Psoas muscle (tissue), 8 donors: ENCODE measurements at regions of chr16 and their contacts with region 1.

Region 1: GRCh38 chr16:30874821-30875717 is 18.8 kb downstream of the BCL7C start:
- DNase-seq: peak; percentile 93 to 96
- ATAC-seq: peak; percentile 98 to 99 (median 98)
- H3K4me3 ChIP-seq: peak overlapping the region; percentile 94
- H3K27ac ChIP-seq: peak overlapping the region; percentile 90
- H3K4me1 ChIP-seq: peaks cover 14% of the 10 kb centered on the region
- H3K27me3 ChIP-seq: no peaks in the 10 kb centered on the region
- CTCF ChIP-seq: no peak

Region 2: GRCh38 chr16:30526823-30527635 is 348.0 kb before region 1 on chr16:
- intact Hi-C with region 1: no loop called
- DNase-seq: peak; percentile 99
- ATAC-seq: peak; percentile 91 to 93 (median 92)
- H3K4me3 ChIP-seq: peak overlapping the region; percentile 93
- H3K27ac ChIP-seq: peak overlapping the region; percentile 99
- H3K4me1 ChIP-seq: peaks cover 17% of the 10 kb centered on the region
- H3K27me3 ChIP-seq: no peaks in the 10 kb centered on the region
- CTCF ChIP-seq: peak; percentile 32

Region 3: DNA sequence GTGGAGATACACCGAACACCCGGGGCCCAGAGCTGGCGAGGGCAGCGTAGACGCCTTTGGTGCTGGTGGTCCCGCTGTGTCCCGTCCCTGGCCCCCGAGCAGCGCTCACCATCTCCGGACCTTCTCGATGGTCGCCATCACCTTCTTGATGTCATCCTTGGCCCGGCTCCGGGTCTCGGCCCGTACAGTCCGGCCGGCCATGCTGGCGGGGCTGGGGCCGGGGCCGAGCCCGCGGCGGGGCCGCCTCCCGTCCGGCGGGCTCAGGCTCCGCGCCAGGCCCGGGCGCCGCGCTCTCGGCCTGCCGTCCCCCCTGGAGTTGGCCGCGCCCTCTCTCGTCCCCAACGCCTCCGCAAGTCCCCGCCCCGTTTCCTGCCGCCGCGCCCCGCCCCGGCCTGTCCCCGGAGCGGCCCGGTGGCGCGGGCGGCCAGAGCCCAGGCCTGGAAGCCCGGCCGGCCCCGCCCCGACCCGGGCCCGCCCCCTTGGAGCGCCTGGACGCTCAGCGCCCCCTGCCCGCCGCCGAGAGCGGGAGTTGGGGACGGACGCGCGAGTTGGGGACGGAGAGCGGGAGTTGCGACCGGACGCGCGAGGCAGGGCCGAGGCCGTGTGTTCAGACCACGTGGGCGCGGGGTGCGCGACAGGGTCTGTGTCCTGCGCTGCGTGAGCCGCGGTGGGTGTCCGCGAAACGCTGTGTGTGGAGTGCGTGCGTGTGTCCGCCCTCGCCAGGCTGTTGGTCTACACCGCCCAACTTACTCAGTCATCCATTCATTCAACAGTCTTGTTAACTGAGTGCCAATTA is 18.9 kb after region 1 on chr16 and contains the start of gene BCL7C:
- intact Hi-C with region 1: loop called in 1 of 2 experiments (anchors 2 kb)
- DNase-seq: peak; percentile 94 to 96
- ATAC-seq: peak; percentile 81 to 89 (median 84)
- H3K4me3 ChIP-seq: peak within 1 kb of the TSS; percentile 95
- H3K27ac ChIP-seq: peak within 1 kb of the TSS; percentile 93
- H3K4me1 ChIP-seq: peaks cover 13% of the 10 kb centered on the region
- H3K27me3 ChIP-seq: no peaks in the 10 kb centered on the region
- CTCF ChIP-seq: peak; percentile 54
- total RNA-seq, gene BCL7C: 13.9 to 18.1 (median 15.1) TPM

Region 4: GRCh38 chr16:30922960-30923535 is 48.0 kb after region 1 on chr16:
- intact Hi-C with region 1: no loop called
- DNase-seq: peak; percentile 100
- ATAC-seq: peak; percentile 80 to 82 (median 81)
- H3K4me3 ChIP-seq: peak overlapping the region; percentile 81
- H3K27ac ChIP-seq: peak overlapping the region; percentile 86
- H3K4me1 ChIP-seq: peaks cover 7% of the 10 kb centered on the region
- H3K27me3 ChIP-seq: no peaks in the 10 kb centered on the region
- CTCF ChIP-seq: no peak